ENCODE measurements at regions of chr22 and their contacts with region 1.

Region 1: DNA sequence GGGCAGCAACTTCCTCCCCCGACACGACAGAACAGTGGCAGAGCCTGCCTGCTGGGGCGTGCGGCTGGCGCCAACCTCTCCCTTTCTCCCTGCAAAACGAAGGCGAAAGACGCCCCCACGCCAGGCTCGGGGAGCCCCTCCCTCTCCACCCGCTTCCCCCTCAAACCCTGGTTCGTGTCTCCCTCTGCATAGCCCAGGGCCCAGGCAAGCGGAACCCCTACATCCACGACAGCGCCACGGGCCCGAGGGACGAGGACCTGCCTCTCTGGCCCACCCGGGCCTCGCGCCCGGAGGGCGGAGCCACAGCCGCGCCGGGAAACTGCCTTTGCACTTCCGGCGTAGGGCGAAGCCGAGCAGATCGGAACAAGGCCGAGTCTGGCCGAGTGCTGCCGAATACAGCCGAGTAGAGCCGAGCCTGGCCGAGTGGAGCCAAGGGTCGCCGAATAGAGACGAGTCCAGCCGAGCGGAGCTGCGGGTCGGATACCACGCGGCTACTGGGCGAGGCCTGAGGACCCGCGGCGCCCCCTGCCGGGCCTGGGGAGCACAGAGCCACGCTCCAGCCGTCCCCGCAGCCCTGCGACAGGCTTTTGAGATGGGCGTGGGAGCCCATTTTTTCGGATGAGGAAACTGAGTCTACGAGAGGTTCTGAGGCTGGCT is 11.2 kb upstream of the C1QTNF6 start:
- DNase-seq: peak; percentile 97 to 100
- H3K4me3 ChIP-seq: peak overlapping the region; percentile 61 to 78 (median 73)
- H3K27ac ChIP-seq: no peak overlapping the region
- H3K4me1 ChIP-seq: peaks cover 3 to 19% (median 10%) of the 10 kb centered on the region in 4 experiments; a peak in 5 of 7 replicates
- H3K27me3 ChIP-seq: no peaks in the 10 kb centered on the region
- CTCF ChIP-seq: peak; percentile 82 to 87 (median 82)
- EP300 ChIP-seq: no peak
- POLR2A ChIP-seq: peak in 1 of 2 experiments; percentile 84; a peak in 2 of 3 replicates
- RAD21 ChIP-seq: peak; percentile 63 to 66

Region 2: GRCh38 chr22:37043828-37044538 is 155.2 kb before region 1 on chr22:
- CTCF ChIA-PET with region 1: interaction called, 11 read pairs
- POLR2A ChIA-PET with region 1: no interaction called
- DNase-seq: no peak
- H3K4me3 ChIP-seq: no peak overlapping the region
- H3K27ac ChIP-seq: no peak overlapping the region
- H3K4me1 ChIP-seq: no peaks in the 10 kb centered on the region; a peak in 1 of 7 replicates
- H3K27me3 ChIP-seq: peaks cover 0 to 11% (median 0%) of the 10 kb centered on the region in 4 experiments; a peak in 4 of 7 replicates
- CTCF ChIP-seq: peak; percentile 15 to 45 (median 20); a peak in 3 of 4 replicates
- EP300 ChIP-seq: no peak
- POLR2A ChIP-seq: no peak
- RAD21 ChIP-seq: no peak; a peak in 1 of 4 replicates

Region 3: DNA sequence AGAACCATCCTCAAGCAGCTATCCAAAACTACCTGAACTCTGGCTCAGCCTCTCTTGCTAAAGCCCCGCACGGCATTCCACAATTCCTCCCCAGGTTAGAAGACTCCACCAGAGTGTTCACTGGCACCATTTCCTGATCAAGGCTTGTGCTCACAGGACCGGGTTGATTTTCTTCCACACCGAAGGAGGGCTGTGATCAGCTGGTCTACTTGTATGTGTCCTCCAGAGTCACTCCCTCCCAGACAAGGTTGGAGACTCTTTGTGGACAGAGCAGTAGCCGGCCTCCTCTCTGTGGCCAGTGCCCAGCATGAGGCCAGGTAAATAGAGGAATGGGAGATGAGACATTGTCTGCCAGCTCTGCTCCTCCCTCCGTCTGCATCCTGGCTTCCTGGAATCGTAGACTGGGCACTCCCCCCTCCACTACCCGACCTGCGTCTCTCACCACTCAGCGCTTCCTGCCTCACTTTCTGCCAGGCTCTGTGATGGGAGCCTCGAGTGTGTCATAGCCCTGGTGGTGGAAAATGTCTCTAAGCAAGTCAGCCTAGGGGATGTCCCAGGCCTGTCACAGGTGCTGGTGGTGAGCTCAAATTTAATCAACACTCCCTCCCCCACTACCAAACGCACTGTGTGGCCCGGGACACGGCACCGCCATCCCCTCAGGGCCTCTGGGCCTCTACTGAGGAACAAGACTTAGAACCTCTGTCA is 77.2 kb before region 1 on chr22:
- CTCF ChIA-PET with region 1: interaction called, 11 read pairs
- POLR2A ChIA-PET with region 1: no interaction called
- DNase-seq: no peak
- H3K4me3 ChIP-seq: no peak overlapping the region
- H3K27ac ChIP-seq: no peak overlapping the region
- H3K4me1 ChIP-seq: peaks cover 0 to 7% (median 2%) of the 10 kb centered on the region in 4 experiments; a peak in 5 of 7 replicates
- H3K27me3 ChIP-seq: 0 out of 7 replicates have a peak, but pooled peaks cover 0 to 2% (median 0%) of the 10 kb centered on the region in 4 experiments
- CTCF ChIP-seq: no peak
- EP300 ChIP-seq: no peak
- POLR2A ChIP-seq: no peak
- RAD21 ChIP-seq: no peak

Region 4: DNA sequence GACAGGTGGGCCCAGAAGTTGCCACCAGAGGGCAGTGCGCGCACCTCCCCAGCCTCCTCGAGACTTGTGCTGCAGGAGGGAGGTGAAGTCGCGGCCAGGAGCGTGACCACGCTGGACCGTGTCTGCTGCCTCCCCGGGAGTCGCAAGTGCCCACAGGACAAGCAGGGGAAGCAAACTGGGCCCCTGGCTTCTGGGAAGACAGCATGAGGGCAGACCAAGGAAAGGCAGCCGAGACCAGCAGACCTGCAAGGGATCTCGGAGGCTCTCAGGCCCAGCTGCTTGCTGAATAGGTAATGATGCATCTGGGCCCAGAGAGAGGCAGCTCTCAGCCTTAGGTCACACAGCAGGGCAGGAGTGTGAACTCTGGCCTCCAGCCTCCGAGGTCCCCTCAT is 32.6 kb before region 1 on chr22:
- CTCF ChIA-PET with region 1: interaction called, 77 read pairs
- POLR2A ChIA-PET with region 1: interaction called, 4 read pairs
- DNase-seq: peak in 1 of 2 experiments; percentile 90
- H3K4me3 ChIP-seq: peak overlapping the region in 1 of 4 experiments; percentile 17; a peak in 1 of 8 replicates
- H3K27ac ChIP-seq: no peak overlapping the region
- H3K4me1 ChIP-seq: peaks cover 0 to 11% (median 2%) of the 10 kb centered on the region in 4 experiments; a peak in 4 of 7 replicates
- H3K27me3 ChIP-seq: no peaks in the 10 kb centered on the region; a peak in 1 of 7 replicates
- CTCF ChIP-seq: peak; percentile 87 to 94 (median 92)
- EP300 ChIP-seq: no peak
- POLR2A ChIP-seq: no peak
- RAD21 ChIP-seq: peak; percentile 71 to 83

Region 5: DNA sequence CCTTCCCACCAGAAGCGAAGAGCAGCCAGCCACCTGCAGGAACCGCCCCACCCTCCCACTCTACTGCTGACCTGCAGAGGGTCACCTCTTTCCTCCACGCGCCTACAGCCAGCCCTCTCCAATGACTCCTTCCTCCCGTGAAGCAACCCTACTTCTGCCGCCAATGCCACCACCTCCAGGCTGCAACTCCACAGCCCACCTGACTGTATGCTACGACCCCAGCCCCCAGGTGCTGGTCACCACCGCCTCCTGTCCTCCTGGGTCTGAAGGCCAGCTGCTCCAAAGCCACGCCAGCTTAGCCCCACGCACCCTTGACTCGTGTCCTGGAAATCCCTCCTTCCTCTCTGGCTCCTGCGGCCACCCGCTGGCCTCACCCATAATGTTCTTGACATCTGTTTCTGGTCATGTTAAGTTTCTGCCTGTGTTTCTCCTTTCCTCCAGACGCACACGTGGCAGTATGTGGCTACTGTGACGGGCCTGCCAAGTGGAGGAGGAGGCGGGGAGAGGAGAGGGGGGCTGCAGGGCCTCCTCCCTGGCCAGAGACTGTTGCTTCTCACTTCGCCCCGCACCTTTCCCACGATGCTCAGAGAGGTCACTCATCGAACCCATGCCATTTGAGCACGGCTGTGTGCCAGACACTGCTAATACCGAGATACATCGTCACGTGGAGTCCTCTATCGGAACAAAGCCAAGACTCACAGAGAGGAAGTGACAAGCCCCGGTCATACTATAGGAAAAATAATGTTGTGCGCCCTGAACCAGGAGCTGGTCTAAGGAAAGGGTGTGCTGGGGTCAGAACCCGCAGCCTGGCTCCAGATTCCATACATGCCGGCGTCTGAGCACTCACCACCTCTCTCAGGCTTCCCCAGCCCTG is 22.8 kb before region 1 on chr22:
- CTCF ChIA-PET with region 1: interaction called, 11 read pairs
- POLR2A ChIA-PET with region 1: interaction called, 3 read pairs
- DNase-seq: no peak
- H3K4me3 ChIP-seq: no peak overlapping the region
- H3K27ac ChIP-seq: no peak overlapping the region
- H3K4me1 ChIP-seq: peaks cover 0 to 4% (median 1%) of the 10 kb centered on the region in 4 experiments; a peak in 3 of 7 replicates
- H3K27me3 ChIP-seq: no peaks in the 10 kb centered on the region; a peak in 2 of 7 replicates
- CTCF ChIP-seq: no peak
- EP300 ChIP-seq: no peak
- POLR2A ChIP-seq: no peak
- RAD21 ChIP-seq: no peak

Region 6: DNA sequence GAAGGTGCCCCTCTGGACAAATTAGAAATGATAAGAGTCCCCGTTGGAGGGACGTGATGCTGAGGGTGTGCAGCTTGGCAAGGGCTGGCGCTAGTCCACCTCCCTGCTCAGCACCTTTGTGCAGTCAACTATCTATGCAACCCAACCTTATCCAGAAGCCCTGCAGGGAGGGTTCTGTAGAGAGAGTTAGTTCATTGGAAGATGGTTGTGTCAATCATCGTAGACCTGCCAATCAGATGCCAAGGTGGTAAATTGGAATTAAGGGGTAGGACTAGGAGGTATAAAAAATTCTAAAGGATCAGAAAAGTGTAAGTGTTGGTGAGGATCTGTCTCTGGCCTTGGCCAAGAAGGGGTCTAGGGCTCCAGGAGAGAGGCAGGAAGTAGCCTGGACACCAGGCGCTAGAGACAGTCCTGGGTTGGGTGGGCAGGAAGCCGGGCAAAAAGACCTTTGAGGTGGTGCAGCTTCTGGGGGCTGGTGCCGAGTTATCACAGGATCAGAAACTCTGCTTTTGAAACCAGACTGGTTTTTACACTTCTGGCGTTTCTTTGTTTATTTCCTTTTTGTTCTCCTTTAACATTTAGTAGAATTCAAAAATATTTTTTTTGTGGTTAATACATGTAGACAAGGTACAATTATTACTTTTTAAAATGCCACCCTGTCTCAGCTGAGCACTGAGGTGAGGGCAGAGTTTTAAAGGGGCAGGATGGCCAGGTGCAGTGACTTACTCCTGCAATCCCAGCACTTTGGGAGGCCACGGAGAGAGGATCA is 12.8 kb before region 1 on chr22:
- CTCF ChIA-PET with region 1: interaction called, 29 read pairs
- POLR2A ChIA-PET with region 1: interaction called, 14 read pairs
- DNase-seq: peak in 1 of 2 experiments; percentile 68
- H3K4me3 ChIP-seq: no peak overlapping the region
- H3K27ac ChIP-seq: no peak overlapping the region
- H3K4me1 ChIP-seq: peaks cover 7 to 23% (median 15%) of the 10 kb centered on the region in 4 experiments
- H3K27me3 ChIP-seq: no peaks in the 10 kb centered on the region
- CTCF ChIP-seq: no peak
- EP300 ChIP-seq: no peak
- POLR2A ChIP-seq: no peak
- RAD21 ChIP-seq: no peak

Region 7: GRCh38 chr22:37210041-37210803 is 11.0 kb after region 1 on chr22:
- CTCF ChIA-PET with region 1: interaction called, 29 read pairs
- POLR2A ChIA-PET with region 1: interaction called, 4 read pairs
- DNase-seq: no peak
- H3K4me3 ChIP-seq: no peak overlapping the region
- H3K27ac ChIP-seq: no peak overlapping the region
- H3K4me1 ChIP-seq: peaks cover 0 to 8% (median 3%) of the 10 kb centered on the region in 4 experiments; a peak in 6 of 7 replicates
- H3K27me3 ChIP-seq: peaks cover 0 to 4% (median 1%) of the 10 kb centered on the region in 4 experiments; a peak in 3 of 7 replicates
- CTCF ChIP-seq: no peak
- EP300 ChIP-seq: no peak
- POLR2A ChIP-seq: no peak
- RAD21 ChIP-seq: no peak